ENCODE measurements at regions of chr18 and their contacts with region 1.

Region 1: GRCh38 chr18:29449424-29449823 is 1272.5 kb upstream of the CDH2 start:
- DNase-seq: no peak
- H3K4me3 ChIP-seq: no peak overlapping the region
- H3K27ac ChIP-seq: no peak overlapping the region
- H3K4me1 ChIP-seq: no peaks in the 10 kb centered on the region
- H3K27me3 ChIP-seq: no peaks in the 10 kb centered on the region
- CTCF ChIP-seq: no peak
- POLR2A ChIP-seq: no peak

Region 2: GRCh38 chr18:29969876-29970275 is 520.5 kb after region 1 on chr18:
- intact Hi-C with region 1: loop called (anchors 5 kb)
- DNase-seq: no peak
- H3K4me3 ChIP-seq: no peak overlapping the region
- H3K27ac ChIP-seq: no peak overlapping the region
- H3K4me1 ChIP-seq: no peaks in the 10 kb centered on the region
- H3K27me3 ChIP-seq: no peaks in the 10 kb centered on the region
- CTCF ChIP-seq: no peak
- POLR2A ChIP-seq: no peak